ENCODE measurements at regions of chr16 and their contacts with region 1.

Region 1: DNA sequence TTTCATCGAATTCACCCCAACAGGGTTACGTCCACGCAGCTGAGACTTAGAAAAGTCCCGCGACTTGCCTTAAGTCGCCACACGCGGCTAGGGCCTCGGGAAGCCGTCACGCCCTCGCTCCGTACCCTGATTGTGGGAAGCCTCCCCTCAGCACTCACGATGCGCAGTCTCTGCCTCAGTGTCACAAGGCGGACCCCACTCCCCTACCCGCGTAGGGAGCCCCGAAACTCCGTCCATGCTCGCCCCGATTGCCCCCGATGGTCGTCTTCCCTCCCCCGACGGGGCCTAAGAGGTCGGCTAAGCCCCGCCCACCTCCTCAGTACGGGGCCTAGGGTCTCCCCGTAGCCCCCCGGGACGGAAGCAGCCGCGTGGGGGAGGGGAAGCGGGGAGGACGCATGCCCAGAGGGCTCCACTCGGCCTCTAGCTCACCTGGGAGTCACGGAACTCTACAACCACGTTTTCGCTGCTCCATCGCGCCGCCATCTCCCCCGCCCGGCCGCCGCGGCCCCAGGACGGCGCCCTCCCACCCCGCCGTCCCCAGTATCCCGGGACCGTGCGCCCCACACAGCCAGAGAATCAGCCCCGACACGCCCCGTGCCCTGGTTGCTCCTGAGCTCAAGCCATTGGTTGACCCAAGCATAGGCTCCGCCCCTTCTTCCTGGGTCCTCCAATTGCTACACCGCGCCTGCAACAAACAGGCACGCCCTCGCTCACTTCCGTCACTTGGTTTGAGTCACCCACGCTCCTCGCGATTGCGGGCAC is at the start of gene WDR59:
- DNase-seq: peak; percentile 100
- H3K4me3 ChIP-seq: peak within 1 kb of the TSS; percentile 81 to 83
- H3K27ac ChIP-seq: peak within 1 kb of the TSS; percentile 58 to 73
- H3K4me1 ChIP-seq: peaks cover 0 to 9% of the 10 kb centered on the region in 2 donors
- H3K27me3 ChIP-seq: no peaks in the 10 kb centered on the region
- CTCF ChIP-seq: no peak
- total RNA-seq, gene WDR59: 22.0 TPM

Region 2: GRCh38 chr16:74695450-74696422 is 289.0 kb before region 1 on chr16:
- intact Hi-C with region 1: no loop called
- DNase-seq: peak; percentile 51 to 91
- H3K4me3 ChIP-seq: peak overlapping the region; percentile 42 to 60
- H3K27ac ChIP-seq: peak overlapping the region; percentile 39 to 51
- H3K4me1 ChIP-seq: no peaks in the 10 kb centered on the region
- H3K27me3 ChIP-seq: no peaks in the 10 kb centered on the region
- CTCF ChIP-seq: no peak

Region 3: DNA sequence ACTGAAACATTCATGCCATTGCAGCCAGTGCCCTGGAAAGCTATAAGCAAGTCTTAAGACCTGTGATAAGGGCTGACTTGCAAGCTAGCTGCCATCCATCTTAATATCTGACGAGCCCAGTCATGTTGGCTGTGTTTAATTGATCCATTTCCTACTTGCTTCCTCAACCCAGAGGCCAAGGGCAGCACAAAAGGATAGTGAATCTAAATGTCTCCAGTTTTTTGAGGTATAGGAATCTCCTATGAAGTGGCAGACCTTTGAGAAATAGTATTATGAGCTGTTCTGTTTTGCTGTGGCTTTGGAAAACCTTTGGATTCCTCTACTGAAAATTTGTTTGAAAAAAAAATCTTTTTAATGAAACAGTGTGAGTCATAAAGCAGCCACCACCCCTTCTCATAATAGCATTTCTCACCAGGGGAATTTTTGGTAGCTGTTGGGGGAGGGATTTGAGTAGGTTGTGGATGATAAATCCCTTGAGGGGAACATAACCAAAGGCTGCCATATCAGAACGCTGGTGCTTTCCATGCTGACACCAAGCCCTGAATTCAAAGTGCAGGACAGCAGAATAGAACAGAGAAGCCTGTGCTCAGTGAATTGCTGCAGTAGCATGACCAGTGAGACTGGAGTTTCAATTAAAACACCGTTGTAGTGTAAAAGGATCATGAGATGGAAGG is 27.1 kb after region 1 on chr16:
- intact Hi-C with region 1: loop called (anchors 1 kb)
- DNase-seq: peak in 1 of 2 donors; percentile 81
- H3K4me3 ChIP-seq: peak overlapping the region in 1 of 2 donors; percentile 30
- H3K27ac ChIP-seq: peak overlapping the region; percentile 86 to 88
- H3K4me1 ChIP-seq: peaks cover 4 to 23% of the 10 kb centered on the region in 2 donors
- H3K27me3 ChIP-seq: no peaks in the 10 kb centered on the region
- CTCF ChIP-seq: no peak

Region 4: GRCh38 chr16:75043175-75043895 is 58.6 kb after region 1 on chr16:
- intact Hi-C with region 1: no loop called
- DNase-seq: no peak
- H3K4me3 ChIP-seq: no peak overlapping the region
- H3K27ac ChIP-seq: peak overlapping the region; percentile 54 to 72
- H3K4me1 ChIP-seq: peaks cover 13 to 31% of the 10 kb centered on the region in 2 donors
- H3K27me3 ChIP-seq: no peaks in the 10 kb centered on the region
- CTCF ChIP-seq: no peak

Measured in ascending aorta (tissue), 2 donors.